CD4-positive, alpha-beta T cell (primary cell): ENCODE measurements at regions of chr2 and their contacts with region 1.

Region 1: DNA sequence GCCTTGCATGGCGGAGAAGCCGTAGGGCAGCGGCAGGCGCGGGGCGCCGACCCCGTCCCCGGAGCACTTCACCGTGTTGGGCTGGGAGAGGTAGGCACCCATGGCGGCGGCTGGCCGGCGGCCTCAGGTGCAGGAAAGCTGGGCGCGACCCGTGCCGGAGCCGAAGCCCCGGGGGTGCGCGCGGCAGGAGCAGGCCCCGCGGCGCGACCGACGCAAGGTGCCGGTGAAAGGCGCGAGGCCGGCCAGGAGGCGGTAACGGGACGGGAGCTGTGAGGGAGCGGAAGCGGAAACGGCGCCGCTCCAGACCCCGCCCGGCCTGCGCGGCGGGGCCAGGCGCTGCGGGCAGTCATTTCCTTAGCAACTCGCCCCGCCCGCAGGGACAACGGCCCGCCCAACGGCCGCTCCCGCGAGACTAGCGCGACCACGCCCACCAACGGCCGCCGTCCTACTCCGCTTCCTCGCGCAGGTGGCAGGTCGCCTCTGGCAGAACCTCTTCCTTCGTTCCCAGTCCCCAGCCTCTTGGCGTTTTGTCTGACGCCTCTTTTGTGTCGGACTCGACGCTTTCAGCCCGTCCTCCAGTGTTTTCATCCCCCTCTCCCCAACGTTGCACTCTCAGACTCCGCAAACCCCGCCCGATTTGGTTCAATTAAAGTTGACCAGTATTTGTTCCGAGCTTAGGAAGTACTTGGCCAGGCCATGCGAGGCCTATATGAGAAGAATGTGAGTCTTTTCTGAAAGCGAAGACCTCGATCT is at the start of gene PPM1G:
- DNase-seq: peak; percentile 92 to 98 (median 96)
- ATAC-seq: peak; percentile 95
- H3K4me3 ChIP-seq: peak within 1 kb of the TSS; percentile 82
- H3K4me3 Mint-ChIP-seq: peak within 1 kb of the TSS; percentile 90
- H3K27ac ChIP-seq: peak within 1 kb of the TSS; percentile 85 to 90
- H3K27ac Mint-ChIP-seq: peak within 1 kb of the TSS; percentile 82
- H3K4me1 ChIP-seq: peaks cover 33% of the 10 kb centered on the region
- H3K4me1 Mint-ChIP-seq: peaks cover 41% of the 10 kb centered on the region
- H3K27me3 ChIP-seq: no peaks in the 10 kb centered on the region
- H3K27me3 Mint-ChIP-seq: no peaks in the 10 kb centered on the region
- CTCF ChIP-seq: no peak
- total RNA-seq, gene PPM1G: 30.4 to 31.2 TPM

Region 2: DNA sequence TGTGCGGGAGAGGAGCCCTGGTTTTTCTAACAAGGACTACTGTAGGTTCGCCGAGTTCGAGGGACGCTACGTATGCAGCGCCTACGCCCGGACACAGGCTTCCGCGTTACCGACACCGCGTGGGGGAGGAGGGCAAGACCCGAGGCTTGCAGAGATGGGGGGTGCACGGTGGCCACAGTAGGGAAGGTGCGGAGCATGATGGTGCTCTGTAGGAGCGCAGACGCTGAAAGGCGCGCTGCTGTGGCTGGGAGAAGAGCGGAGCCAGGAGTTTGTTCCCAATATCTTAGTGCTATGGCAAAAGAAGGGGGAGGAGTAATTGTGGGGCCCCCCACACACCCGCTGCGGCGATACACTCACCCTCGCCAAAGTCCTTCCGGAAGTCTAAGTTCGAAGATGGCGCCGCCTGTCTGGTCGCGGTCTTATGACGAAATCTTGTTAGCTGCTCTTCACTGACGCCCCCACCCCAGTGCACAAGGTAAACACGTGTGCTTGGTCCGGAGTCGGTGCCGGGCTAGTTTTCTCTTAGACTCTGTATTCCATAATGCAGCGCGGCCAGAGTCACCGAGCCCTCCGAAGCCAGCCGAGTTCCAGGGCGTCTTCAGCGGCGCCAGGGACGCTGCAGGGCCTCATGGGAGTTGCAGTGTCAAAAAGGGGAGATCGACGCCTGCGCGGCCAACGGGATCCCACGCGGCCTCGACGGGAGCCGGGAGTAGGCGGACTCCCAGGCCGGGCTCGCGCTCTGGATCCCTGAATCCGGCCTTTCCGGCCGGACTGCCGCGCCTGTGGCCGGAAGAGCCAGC is 52.9 kb before region 1 on chr2 and contains the start of gene GTF3C2:
- CTCF ChIA-PET with region 1: no interaction called
- POLR2A ChIA-PET with region 1: interaction called, 8 read pairs
- intact Hi-C with region 1: loop called in 1 of 2 experiments (anchors 1 kb)
- DNase-seq: peak; percentile 82 to 97 (median 88)
- ATAC-seq: peak; percentile 78
- H3K4me3 ChIP-seq: peak within 1 kb of the TSS; percentile 86
- H3K4me3 Mint-ChIP-seq: peak within 1 kb of the TSS; percentile 96
- H3K27ac ChIP-seq: peak within 1 kb of the TSS; percentile 87 to 89
- H3K27ac Mint-ChIP-seq: peak within 1 kb of the TSS; percentile 99
- H3K4me1 ChIP-seq: peaks cover 44% of the 10 kb centered on the region
- H3K4me1 Mint-ChIP-seq: peaks cover 56% of the 10 kb centered on the region
- H3K27me3 ChIP-seq: no peaks in the 10 kb centered on the region
- H3K27me3 Mint-ChIP-seq: no peaks in the 10 kb centered on the region
- CTCF ChIP-seq: no peak
- total RNA-seq, gene GTF3C2: 54.6 to 56.8 TPM

Region 3: GRCh38 chr2:27380626-27381545 is 28.6 kb before region 1 on chr2 and contains the start of gene ZNF513:
- CTCF ChIA-PET with region 1: no interaction called
- POLR2A ChIA-PET with region 1: interaction called, 16 read pairs
- intact Hi-C with region 1: loop called in 1 of 2 experiments (anchors 2 kb)
- DNase-seq: peak; percentile 75 to 94 (median 86)
- ATAC-seq: peak; percentile 92
- H3K4me3 ChIP-seq: peak within 1 kb of the TSS; percentile 66
- H3K4me3 Mint-ChIP-seq: peak within 1 kb of the TSS; percentile 93
- H3K27ac ChIP-seq: peak within 1 kb of the TSS; percentile 80 to 86
- H3K27ac Mint-ChIP-seq: peak within 1 kb of the TSS; percentile 91
- H3K4me1 ChIP-seq: peaks cover 18% of the 10 kb centered on the region
- H3K4me1 Mint-ChIP-seq: peaks cover 32% of the 10 kb centered on the region
- H3K27me3 ChIP-seq: no peaks in the 10 kb centered on the region
- H3K27me3 Mint-ChIP-seq: no peaks in the 10 kb centered on the region
- CTCF ChIP-seq: no peak
- total RNA-seq, gene ZNF513: 22.8 to 22.9 TPM

Region 4: DNA sequence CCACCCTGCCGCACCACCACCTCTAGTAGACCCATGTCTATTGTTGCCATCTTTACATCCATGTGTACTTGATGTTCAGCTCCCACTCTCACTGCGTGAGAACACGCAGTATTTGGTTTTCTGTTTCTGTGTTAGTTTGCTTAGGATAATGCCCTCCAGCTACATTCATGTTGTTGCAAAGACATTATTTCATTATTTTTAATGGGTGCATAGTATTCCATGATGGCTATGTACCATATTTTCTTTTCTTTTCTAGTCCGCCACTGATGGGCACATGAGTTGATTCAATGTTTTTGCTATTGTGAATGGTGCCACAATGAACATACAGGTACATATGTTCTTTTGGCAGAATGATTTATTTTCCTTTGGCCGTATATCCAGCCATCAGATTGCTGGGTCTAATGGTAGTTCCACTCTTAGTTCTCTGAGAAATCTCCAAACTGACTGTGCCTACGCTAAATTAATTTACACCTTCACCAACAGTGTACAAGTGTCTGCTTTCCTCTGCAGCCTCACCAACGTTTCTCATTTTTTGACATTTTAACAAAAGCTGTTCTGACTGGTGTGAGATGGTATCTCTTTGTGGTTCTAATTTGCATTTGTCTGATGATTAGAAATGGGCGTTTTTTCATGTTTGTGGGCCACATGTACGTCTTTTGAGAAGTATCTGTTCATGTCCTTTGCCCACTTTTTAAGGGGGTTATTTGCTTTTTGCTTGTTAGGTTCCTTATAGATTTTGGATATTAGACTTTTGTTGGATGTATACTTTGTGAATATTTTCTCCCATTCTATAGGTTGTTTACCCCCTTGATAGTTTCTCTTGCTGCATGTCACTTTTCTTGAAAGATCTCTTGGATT is 18.4 kb before region 1 on chr2:
- CTCF ChIA-PET with region 1: interaction called, 3 read pairs
- POLR2A ChIA-PET with region 1: interaction called, 11 read pairs
- intact Hi-C with region 1: no loop called
- DNase-seq: peak in 3 of 14 experiments; percentile 73 to 77 (median 74)
- ATAC-seq: peak; percentile 80
- H3K4me3 ChIP-seq: no peak overlapping the region
- H3K4me3 Mint-ChIP-seq: peak overlapping the region; percentile 32
- H3K27ac ChIP-seq: peak overlapping the region; percentile 47 to 52
- H3K27ac Mint-ChIP-seq: peak overlapping the region; percentile 86
- H3K4me1 ChIP-seq: peaks cover 25% of the 10 kb centered on the region
- H3K4me1 Mint-ChIP-seq: peaks cover 32% of the 10 kb centered on the region
- H3K27me3 ChIP-seq: no peaks in the 10 kb centered on the region
- H3K27me3 Mint-ChIP-seq: no peaks in the 10 kb centered on the region
- CTCF ChIP-seq: no peak

Region 5: DNA sequence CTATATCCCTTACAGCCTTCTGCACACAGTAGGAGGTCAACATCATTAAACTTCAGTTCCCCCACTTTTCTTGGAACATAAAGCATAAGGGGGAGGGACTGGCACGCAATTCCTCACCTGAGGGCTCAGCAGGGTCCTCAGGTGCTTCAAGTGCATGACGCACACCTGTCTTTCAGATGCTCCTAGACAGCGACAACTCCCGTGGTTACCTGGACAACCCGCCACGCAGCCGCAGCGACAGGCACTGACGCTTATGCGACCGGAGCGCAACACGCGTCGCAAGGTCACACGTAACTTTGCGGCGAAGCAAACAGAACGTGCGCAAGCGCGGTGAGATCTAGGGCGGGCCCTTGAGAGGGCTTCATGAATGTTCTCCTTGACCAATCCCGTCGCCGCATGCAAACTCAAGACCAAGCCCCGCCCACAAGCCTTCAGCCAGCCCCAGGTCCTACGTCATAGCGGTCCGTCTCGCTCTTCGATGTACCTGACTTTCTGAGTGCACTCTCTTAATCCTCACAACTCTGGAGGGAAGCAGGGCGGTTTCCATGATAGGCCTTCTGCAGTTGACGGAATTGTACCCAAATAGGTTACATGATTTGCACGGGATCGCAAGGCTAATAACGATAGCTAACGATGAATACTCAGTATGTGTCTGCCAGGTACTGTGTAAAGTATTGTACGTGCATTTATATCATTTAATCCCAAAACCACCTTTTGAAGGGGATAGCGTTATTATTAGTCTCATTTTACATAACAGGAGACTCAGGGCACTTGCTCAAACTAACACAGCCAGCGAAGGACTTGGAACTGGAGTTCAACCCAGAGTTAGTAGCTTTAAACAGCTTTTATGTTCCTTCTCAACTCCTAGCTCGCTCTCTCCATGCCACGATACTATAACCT is 80.3 kb after region 1 on chr2 and contains the start of gene IFT172:
- CTCF ChIA-PET with region 1: no interaction called
- POLR2A ChIA-PET with region 1: no interaction called
- intact Hi-C with region 1: loop called in 1 of 2 experiments (anchors 1 kb)
- DNase-seq: peak; percentile 97 to 100 (median 99)
- ATAC-seq: peak; percentile 85
- H3K4me3 ChIP-seq: peak within 1 kb of the TSS; percentile 61
- H3K4me3 Mint-ChIP-seq: peak within 1 kb of the TSS; percentile 80
- H3K27ac ChIP-seq: peak within 1 kb of the TSS; percentile 55 to 91
- H3K27ac Mint-ChIP-seq: peak within 1 kb of the TSS; percentile 93
- H3K4me1 ChIP-seq: peaks cover 20% of the 10 kb centered on the region
- H3K4me1 Mint-ChIP-seq: peaks cover 18% of the 10 kb centered on the region
- H3K27me3 ChIP-seq: peaks cover 11 to 13% of the 10 kb centered on the region in 2 experiments
- H3K27me3 Mint-ChIP-seq: peaks cover 12% of the 10 kb centered on the region
- CTCF ChIP-seq: no peak
- total RNA-seq, gene IFT172: 13.3 to 14.4 TPM

Region 6: DNA sequence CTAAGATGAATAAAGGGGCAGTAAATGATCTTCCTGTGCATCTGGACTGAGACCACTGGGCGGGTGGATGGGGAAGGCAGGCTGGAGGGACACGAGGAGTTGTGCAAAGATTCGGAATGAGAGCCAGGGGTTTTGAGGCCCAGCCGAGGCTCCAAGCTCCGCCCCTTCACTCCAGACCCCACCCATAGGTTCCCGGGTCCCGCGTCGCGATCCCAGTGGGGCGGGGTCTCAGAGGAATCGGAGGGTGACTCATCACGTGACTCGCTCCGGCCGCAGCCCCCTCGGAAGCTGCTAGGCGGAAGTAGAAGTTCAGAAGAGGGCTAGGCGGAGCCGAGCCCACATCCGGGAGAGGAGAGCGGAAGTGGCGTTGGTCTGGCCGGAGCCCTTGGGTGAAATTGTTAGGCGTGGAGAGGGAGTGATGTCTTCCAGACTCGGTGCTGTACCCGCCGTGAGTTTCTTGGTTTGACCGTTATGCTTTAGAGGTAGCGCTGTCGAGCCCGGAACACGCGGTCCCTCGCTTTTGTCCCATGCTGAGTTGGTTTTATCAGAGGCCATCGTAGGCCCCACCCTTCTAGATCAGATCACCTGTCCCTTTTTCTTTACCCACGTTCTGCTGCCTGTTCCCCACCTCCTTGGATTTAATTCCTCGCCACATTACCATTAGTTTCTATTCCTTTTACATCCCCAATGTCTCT is 173.3 kb after region 1 on chr2 and contains the start of gene ZNF512:
- CTCF ChIA-PET with region 1: no interaction called
- POLR2A ChIA-PET with region 1: no interaction called
- intact Hi-C with region 1: loop called in 1 of 2 experiments (anchors 10 kb)
- DNase-seq: peak; percentile 53 to 91 (median 70)
- ATAC-seq: peak; percentile 81
- H3K4me3 ChIP-seq: peak within 1 kb of the TSS; percentile 74
- H3K4me3 Mint-ChIP-seq: peak within 1 kb of the TSS; percentile 94
- H3K27ac ChIP-seq: peak within 1 kb of the TSS; percentile 56 to 80
- H3K27ac Mint-ChIP-seq: peak within 1 kb of the TSS; percentile 92
- H3K4me1 ChIP-seq: peaks cover 46% of the 10 kb centered on the region
- H3K4me1 Mint-ChIP-seq: peaks cover 54% of the 10 kb centered on the region
- H3K27me3 ChIP-seq: no peaks in the 10 kb centered on the region
- H3K27me3 Mint-ChIP-seq: no peaks in the 10 kb centered on the region
- CTCF ChIP-seq: no peak
- total RNA-seq, gene ZNF512: 13.6 to 14.1 TPM

Region 7: DNA sequence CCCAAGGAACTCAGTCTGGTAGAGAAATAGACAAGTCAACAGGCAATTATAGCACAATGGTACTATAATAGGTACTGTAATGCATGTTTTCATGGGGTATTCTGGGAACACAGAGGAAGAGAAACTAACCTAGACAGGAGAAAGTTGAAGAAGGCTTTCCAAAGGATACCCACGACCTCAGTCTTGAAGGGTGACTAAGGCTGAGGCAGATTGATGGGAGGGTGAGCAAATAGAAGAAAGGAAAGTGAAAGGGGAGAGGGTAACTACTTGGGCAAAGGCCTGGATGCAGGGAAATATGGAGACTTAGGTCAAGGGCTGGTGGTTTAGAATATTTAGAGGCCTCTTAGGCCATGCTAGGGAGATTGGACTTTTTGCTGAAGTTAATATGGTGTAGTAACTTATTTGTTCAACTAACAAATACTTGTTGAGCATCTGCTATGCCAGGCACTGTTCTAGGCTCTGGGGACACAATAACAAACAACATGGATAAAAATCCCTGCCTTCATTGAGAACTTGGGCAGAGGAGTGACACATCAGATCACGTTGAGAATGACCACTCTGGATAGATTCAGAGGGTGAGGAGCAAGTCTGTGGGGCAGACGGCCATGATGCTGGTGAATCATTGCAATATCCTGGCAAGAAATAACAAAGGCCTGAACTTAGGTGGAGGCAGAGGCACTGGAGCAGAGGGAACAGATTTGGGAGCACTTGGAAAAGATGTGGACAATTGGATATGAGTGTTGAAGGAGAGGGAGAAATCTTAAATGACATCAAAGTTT is 1142.7 kb after region 1 on chr2:
- CTCF ChIA-PET with region 1: no interaction called
- POLR2A ChIA-PET with region 1: no interaction called
- intact Hi-C with region 1: no loop called
- DNase-seq: no peak
- ATAC-seq: no peak
- H3K4me3 ChIP-seq: no peak overlapping the region
- H3K4me3 Mint-ChIP-seq: no peak overlapping the region
- H3K27ac ChIP-seq: no peak overlapping the region
- H3K27ac Mint-ChIP-seq: no peak overlapping the region
- H3K4me1 ChIP-seq: peaks cover 2% of the 10 kb centered on the region
- H3K4me1 Mint-ChIP-seq: no peaks in the 10 kb centered on the region
- H3K27me3 ChIP-seq: no peaks in the 10 kb centered on the region
- H3K27me3 Mint-ChIP-seq: no peaks in the 10 kb centered on the region
- CTCF ChIP-seq: no peak